GM10248 (cell line): ENCODE measurements at regions of chr3 and their contacts with region 1.

Region 1: GRCh38 chr3:149771652-149772271 is 19.5 kb upstream of the COMMD2 start:
- DNase-seq: peak; percentile 60
- CTCF ChIP-seq: peak; percentile 75

Region 2: DNA sequence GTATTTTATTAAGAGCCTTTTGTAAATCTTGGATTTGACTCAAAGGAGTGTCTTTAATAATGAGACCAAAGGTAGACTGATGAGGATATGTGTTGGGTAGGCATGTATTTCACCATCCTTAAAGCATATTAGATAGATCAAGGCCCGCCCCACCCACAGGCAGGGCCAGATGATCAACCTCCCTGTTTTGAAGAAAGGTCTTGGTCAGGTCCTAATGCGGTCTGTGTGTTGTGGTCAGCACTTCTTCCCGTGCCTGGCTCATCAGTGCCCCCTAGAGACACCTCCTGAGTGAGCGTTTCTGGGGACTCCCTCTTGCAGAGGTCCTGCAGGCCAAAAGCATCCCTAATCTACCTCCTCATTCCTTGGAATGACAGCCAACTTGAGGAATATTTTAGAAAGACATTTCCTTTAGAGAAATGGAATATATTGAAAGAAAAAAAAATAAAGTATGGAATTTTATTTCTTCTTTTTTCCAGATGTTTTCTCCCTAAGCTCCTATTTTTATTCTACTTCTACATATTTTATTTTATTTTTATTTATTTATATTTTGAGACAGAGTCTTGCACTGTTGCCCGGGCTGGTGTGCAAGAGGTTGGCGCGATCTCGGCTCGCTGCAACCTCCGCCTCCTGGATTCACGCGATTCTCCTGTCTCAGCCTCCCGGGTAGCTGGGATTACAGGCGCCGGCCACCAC is 291.3 kb before region 1 on chr3:
- CTCF ChIA-PET with region 1: interaction called, 11 read pairs
- POLR2A ChIA-PET with region 1: no interaction called
- DNase-seq: peak; percentile 83
- CTCF ChIP-seq: peak; percentile 91

Region 3: GRCh38 chr3:149512209-149512782 is 259.5 kb before region 1 on chr3:
- CTCF ChIA-PET with region 1: interaction called, 71 read pairs
- POLR2A ChIA-PET with region 1: no interaction called
- DNase-seq: peak; percentile 70
- CTCF ChIP-seq: peak; percentile 96

Region 4: GRCh38 chr3:149536429-149536828 is 235.3 kb before region 1 on chr3:
- CTCF ChIA-PET with region 1: interaction called, 16 read pairs
- POLR2A ChIA-PET with region 1: no interaction called
- DNase-seq: no peak
- CTCF ChIP-seq: no peak

Region 5: DNA sequence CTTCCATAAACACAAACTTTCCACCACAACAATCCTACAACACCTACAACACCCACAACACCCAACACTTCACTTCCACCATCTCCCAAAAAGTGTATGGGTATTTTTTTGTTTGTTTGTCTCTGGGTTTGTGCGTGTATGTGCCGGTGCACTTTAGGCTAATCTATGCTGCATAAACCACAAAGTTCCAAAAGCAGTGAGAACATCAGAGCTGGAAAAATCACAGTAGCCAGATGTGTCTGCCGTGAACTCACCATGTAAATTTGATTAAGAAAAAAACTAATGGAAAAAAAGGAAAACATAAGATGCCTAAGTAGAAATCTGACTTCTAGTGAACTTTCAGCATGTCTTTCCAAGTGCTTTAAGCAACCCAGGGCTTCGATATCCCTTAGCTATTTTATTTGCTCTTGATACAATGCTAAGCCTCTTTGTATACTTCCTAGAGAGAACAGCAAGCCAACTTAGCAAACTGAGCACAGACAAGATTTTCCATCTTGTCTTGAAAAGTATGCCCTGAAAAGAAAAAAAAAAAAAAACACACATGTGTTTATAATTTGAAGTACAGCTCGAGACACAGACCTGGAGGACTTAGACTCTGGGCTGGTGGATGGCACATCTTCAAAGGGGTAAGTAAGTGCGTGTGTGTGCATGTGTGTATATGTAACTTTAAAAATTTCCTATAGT is 205.3 kb before region 1 on chr3:
- CTCF ChIA-PET with region 1: interaction called, 57 read pairs
- POLR2A ChIA-PET with region 1: no interaction called
- DNase-seq: no peak
- CTCF ChIP-seq: no peak

Region 6: GRCh38 chr3:149752051-149752787 is 19.5 kb before region 1 on chr3 and contains the start of gene COMMD2:
- CTCF ChIA-PET with region 1: interaction called, 31 read pairs
- POLR2A ChIA-PET with region 1: interaction called, 3 read pairs
- DNase-seq: peak; percentile 84
- CTCF ChIP-seq: no peak

Region 7: DNA sequence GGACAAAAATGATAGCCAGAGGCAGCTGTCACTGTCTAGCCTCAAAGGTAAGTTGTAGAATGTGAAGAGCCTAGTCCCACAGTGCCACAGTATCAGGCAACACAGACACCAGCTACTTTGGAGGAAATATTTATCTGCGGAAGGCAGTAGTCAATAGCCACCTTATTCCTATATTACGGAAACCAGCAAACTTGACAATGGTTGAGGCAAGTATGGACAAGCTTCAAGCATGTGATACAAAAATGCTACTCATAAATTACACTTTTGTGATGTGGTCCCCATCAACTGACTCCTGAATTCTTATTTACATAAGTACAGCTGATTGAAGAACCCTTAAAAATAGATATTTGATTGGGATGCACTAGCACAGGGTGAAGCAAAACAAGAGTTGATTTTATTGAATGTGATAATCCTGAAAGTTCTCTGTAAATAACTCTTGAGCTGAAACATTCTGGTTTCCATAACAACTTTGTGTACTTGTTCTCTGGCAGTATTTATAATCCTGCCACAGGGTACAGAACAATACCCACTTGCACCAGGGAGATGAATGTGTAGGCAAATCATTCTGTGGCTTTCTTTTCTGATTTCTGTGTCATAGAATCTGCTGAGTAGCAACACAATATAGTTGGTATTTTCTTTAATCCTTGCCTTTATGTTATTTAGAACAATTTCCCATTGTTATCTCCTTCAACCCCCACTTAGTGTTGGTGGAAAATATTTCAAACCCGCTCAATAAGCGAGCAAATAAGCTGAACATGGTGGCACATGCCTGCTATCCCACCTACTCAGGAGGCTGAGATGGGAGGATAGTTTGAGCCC is 20.9 kb after region 1 on chr3 and contains the start of gene ANKUB1:
- CTCF ChIA-PET with region 1: interaction called, 10 read pairs
- POLR2A ChIA-PET with region 1: no interaction called
- DNase-seq: no peak
- CTCF ChIP-seq: no peak